CD4-positive, alpha-beta T cell (primary cell): ENCODE measurements at regions of chr16 and their contacts with region 1.

Region 1: GRCh38 chr16:74709441-74709877 is 8.8 kb upstream of the MLKL start:
- DNase-seq: peak; percentile 65 to 91 (median 80)
- ATAC-seq: peak; percentile 100
- H3K4me3 ChIP-seq: no peak overlapping the region
- H3K4me3 Mint-ChIP-seq: no peak overlapping the region
- H3K27ac ChIP-seq: no peak overlapping the region
- H3K27ac Mint-ChIP-seq: no peak overlapping the region
- H3K4me1 ChIP-seq: peaks cover 2% of the 10 kb centered on the region
- H3K4me1 Mint-ChIP-seq: no peaks in the 10 kb centered on the region
- H3K27me3 ChIP-seq: no peaks in the 10 kb centered on the region
- H3K27me3 Mint-ChIP-seq: no peaks in the 10 kb centered on the region
- CTCF ChIP-seq: peak; percentile 98

Region 2: GRCh38 chr16:74760007-74760767 is 50.7 kb after region 1 on chr16:
- CTCF ChIA-PET with region 1: no interaction called
- POLR2A ChIA-PET with region 1: no interaction called
- intact Hi-C with region 1: no loop called
- DNase-seq: peak in 3 of 14 experiments; percentile 16 to 51 (median 29)
- ATAC-seq: no peak
- H3K4me3 ChIP-seq: no peak overlapping the region
- H3K4me3 Mint-ChIP-seq: no peak overlapping the region
- H3K27ac ChIP-seq: no peak overlapping the region
- H3K27ac Mint-ChIP-seq: no peak overlapping the region
- H3K4me1 ChIP-seq: no peaks in the 10 kb centered on the region
- H3K4me1 Mint-ChIP-seq: no peaks in the 10 kb centered on the region
- H3K27me3 ChIP-seq: peaks cover 0 to 4% of the 10 kb centered on the region in 2 experiments
- H3K27me3 Mint-ChIP-seq: peaks cover 15% of the 10 kb centered on the region
- CTCF ChIP-seq: no peak

Region 3: DNA sequence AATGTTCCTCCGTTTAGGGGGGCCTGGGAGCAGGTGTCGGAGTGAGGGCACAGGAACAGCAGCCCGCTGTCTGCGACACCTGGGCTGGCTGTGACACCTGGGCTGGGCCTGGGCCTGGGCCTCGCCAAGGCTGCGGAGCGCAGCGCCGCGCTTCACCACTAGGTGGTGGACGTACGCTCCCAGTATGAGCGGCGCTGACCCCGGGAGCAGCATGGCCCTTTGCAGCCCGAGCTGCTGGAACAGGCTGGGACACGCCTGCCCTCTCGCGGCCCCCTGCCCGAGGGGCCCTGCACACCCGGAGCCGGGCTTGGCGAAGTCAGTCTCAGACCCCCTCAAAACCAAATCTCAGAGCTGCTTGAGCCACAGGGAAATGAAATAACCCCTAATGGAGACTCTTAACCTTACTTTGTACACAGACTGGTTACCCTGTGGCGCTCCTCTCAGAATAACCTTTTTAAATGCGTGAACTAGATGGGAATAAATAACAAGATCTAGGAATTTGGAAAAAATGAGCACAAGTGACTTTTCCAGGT is 103.7 kb after region 1 on chr16:
- CTCF ChIA-PET with region 1: no interaction called
- POLR2A ChIA-PET with region 1: no interaction called
- intact Hi-C with region 1: loop called in 1 of 2 experiments (anchors 2 kb)
- DNase-seq: peak; percentile 50 to 84 (median 66)
- ATAC-seq: peak; percentile 99
- H3K4me3 ChIP-seq: no peak overlapping the region
- H3K4me3 Mint-ChIP-seq: no peak overlapping the region
- H3K27ac ChIP-seq: no peak overlapping the region
- H3K27ac Mint-ChIP-seq: no peak overlapping the region
- H3K4me1 ChIP-seq: peaks cover 6% of the 10 kb centered on the region
- H3K4me1 Mint-ChIP-seq: no peaks in the 10 kb centered on the region
- H3K27me3 ChIP-seq: no peaks in the 10 kb centered on the region
- H3K27me3 Mint-ChIP-seq: no peaks in the 10 kb centered on the region
- CTCF ChIP-seq: peak; percentile 96

Region 4: GRCh38 chr16:74862741-74863244 is 153.3 kb after region 1 on chr16:
- CTCF ChIA-PET with region 1: interaction called, 9 read pairs
- POLR2A ChIA-PET with region 1: no interaction called
- intact Hi-C with region 1: loop called in 1 of 2 experiments (anchors 1 kb)
- DNase-seq: peak in 4 of 14 experiments; percentile 14 to 64 (median 58)
- ATAC-seq: no peak
- H3K4me3 ChIP-seq: no peak overlapping the region
- H3K4me3 Mint-ChIP-seq: no peak overlapping the region
- H3K27ac ChIP-seq: no peak overlapping the region
- H3K27ac Mint-ChIP-seq: peak overlapping the region; percentile 63
- H3K4me1 ChIP-seq: peaks cover 6% of the 10 kb centered on the region
- H3K4me1 Mint-ChIP-seq: peaks cover 12% of the 10 kb centered on the region
- H3K27me3 ChIP-seq: no peaks in the 10 kb centered on the region
- H3K27me3 Mint-ChIP-seq: no peaks in the 10 kb centered on the region
- CTCF ChIP-seq: peak; percentile 81

Region 5: GRCh38 chr16:74984535-74985296 is 275.3 kb after region 1 on chr16 and contains the start of gene WDR59:
- CTCF ChIA-PET with region 1: no interaction called
- POLR2A ChIA-PET with region 1: no interaction called
- intact Hi-C with region 1: loop called (anchors 10 kb)
- DNase-seq: peak; percentile 94 to 100 (median 98)
- ATAC-seq: peak; percentile 98
- H3K4me3 ChIP-seq: peak within 1 kb of the TSS; percentile 100
- H3K4me3 Mint-ChIP-seq: peak within 1 kb of the TSS; percentile 96
- H3K27ac ChIP-seq: peak within 1 kb of the TSS; percentile 44 to 61
- H3K27ac Mint-ChIP-seq: peak within 1 kb of the TSS; percentile 84
- H3K4me1 ChIP-seq: peaks cover 23% of the 10 kb centered on the region
- H3K4me1 Mint-ChIP-seq: peaks cover 23% of the 10 kb centered on the region
- H3K27me3 ChIP-seq: no peaks in the 10 kb centered on the region
- H3K27me3 Mint-ChIP-seq: no peaks in the 10 kb centered on the region
- CTCF ChIP-seq: no peak
- total RNA-seq, gene WDR59: 60.2 to 67.2 TPM

Region 6: GRCh38 chr16:75192601-75193297 is 483.3 kb after region 1 on chr16:
- CTCF ChIA-PET with region 1: no interaction called
- POLR2A ChIA-PET with region 1: no interaction called
- intact Hi-C with region 1: no loop called
- DNase-seq: no peak
- ATAC-seq: no peak
- H3K4me3 ChIP-seq: no peak overlapping the region
- H3K4me3 Mint-ChIP-seq: no peak overlapping the region
- H3K27ac ChIP-seq: no peak overlapping the region
- H3K27ac Mint-ChIP-seq: no peak overlapping the region
- H3K4me1 ChIP-seq: no peaks in the 10 kb centered on the region
- H3K4me1 Mint-ChIP-seq: no peaks in the 10 kb centered on the region
- H3K27me3 ChIP-seq: peaks cover under 1 to 6% of the 10 kb centered on the region in 2 experiments
- H3K27me3 Mint-ChIP-seq: peaks cover 17% of the 10 kb centered on the region
- CTCF ChIP-seq: no peak